ENCODE measurements at regions of chr1 and their contacts with region 1.

Region 1: GRCh38 chr1:91511386-91511785 is 10.7 kb downstream of the CDC7 start:
- DNase-seq: peak; percentile 23
- H3K4me3 ChIP-seq: no peak overlapping the region
- CTCF ChIP-seq: peak; percentile 56

Region 2: GRCh38 chr1:91913018-91913417 is 401.6 kb after region 1 on chr1:
- in situ Hi-C with region 1: loop called (anchors 10 kb)
- DNase-seq: no peak
- H3K4me3 ChIP-seq: no peak overlapping the region
- CTCF ChIP-seq: no peak

Measured in astrocyte of the cerebellum (primary cell).